IMR-90 (cell line): ENCODE measurements at regions of chr11 and their contacts with region 1.

Region 1: DNA sequence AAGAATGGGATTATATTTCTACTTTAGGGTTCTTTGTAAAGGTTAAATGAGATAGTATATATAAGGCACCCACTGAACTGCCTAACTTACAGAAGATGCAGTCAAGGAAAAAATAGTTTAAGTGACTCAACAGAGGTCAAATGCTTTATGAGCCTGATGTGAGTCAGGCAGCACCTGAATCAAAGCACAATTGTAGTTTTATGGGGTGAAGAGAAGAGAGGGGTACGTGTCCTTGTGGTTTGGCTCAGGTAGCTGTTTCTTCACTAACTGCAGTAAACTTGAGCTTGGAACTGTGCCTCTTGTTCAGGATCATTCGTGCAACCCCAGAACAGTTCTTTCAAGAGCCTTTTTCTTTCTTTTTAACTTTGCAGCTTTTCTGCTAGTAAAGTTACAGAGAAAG is 125.2 kb upstream of the SPON1 start:
- DNase-seq: peak; percentile 22
- ATAC-seq: no peak
- H3K4me3 ChIP-seq: no peak overlapping the region
- H3K27ac ChIP-seq: no peak overlapping the region
- H3K4me1 ChIP-seq: no peaks in the 10 kb centered on the region
- H3K27me3 ChIP-seq: no peaks in the 10 kb centered on the region
- CTCF ChIP-seq: no peak
- POLR2A ChIP-seq: no peak
- RAD21 ChIP-seq: no peak

Region 2: GRCh38 chr11:13784855-13785254 is 52.4 kb before region 1 on chr11:
- CTCF ChIA-PET with region 1: no interaction called
- POLR2A ChIA-PET with region 1: no interaction called
- dilution Hi-C with region 1: no loop called
- in situ Hi-C with region 1: no loop called
- intact Hi-C with region 1: loop called (anchors 5 kb)
- DNase-seq: no peak
- ATAC-seq: no peak
- H3K4me3 ChIP-seq: no peak overlapping the region
- H3K27ac ChIP-seq: no peak overlapping the region
- H3K4me1 ChIP-seq: no peaks in the 10 kb centered on the region
- H3K27me3 ChIP-seq: peaks cover 4% of the 10 kb centered on the region
- CTCF ChIP-seq: no peak
- POLR2A ChIP-seq: no peak
- RAD21 ChIP-seq: no peak

Region 3: GRCh38 chr11:13942983-13943382 is 105.7 kb after region 1 on chr11:
- CTCF ChIA-PET with region 1: no interaction called
- POLR2A ChIA-PET with region 1: no interaction called
- dilution Hi-C with region 1: no loop called
- in situ Hi-C with region 1: no loop called
- intact Hi-C with region 1: no loop called
- DNase-seq: peak; percentile 24
- ATAC-seq: peak; percentile 54; the same call in 1 of the 2 replicates
- H3K4me3 ChIP-seq: no peak overlapping the region
- H3K27ac ChIP-seq: no peak overlapping the region
- H3K4me1 ChIP-seq: peaks cover 2% of the 10 kb centered on the region; the same call in 1 of the 2 replicates
- H3K27me3 ChIP-seq: no peaks in the 10 kb centered on the region; the same call in 1 of the 2 replicates
- CTCF ChIP-seq: no peak
- POLR2A ChIP-seq: no peak
- RAD21 ChIP-seq: no peak